ENCODE measurements at regions of chr1 and their contacts with region 1.

Region 1: DNA sequence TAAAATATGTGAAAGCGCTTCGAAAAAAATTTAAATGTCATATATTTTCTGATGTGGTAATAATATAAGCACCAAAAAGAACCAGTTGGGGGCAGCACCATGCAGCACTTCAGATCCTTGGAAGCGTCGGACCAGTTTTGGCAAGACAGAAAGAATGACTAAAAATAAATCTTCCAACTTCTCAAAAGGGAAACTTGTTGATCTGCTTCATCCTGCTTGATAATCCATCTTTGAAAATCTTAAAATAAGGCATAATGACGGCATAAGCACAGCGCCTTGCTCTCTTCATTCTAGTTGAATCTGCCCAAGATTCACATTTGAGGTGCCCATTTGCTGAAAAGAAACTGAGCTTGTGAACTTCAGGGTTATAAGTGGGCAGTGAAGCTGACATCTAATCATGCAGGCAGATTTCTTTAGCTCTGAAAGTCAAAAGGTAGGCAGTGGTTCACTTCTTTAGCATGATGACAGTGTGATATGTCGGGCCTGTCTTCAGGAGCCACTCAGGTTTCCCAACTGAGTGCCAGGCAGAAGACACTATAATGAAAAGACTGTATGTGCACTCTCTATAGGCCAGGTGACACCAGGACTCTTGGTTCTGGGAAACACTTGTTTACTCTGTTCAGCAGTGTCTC is 19.8 kb upstream of the MUTYH start:
- DNase-seq: peak; percentile 77 to 85
- H3K4me3 ChIP-seq: no peak overlapping the region
- CTCF ChIP-seq: no peak
- POLR2A ChIP-seq: no peak

Region 2: GRCh38 chr1:45410850-45411314 is 50.9 kb after region 1 on chr1:
- intact Hi-C with region 1: no loop called
- DNase-seq: peak in 1 of 2 donors; percentile 55
- H3K4me3 ChIP-seq: no peak overlapping the region
- CTCF ChIP-seq: no peak
- POLR2A ChIP-seq: no peak

Region 3: GRCh38 chr1:45490626-45491486 is 130.9 kb after region 1 on chr1 and contains the start of gene TESK2:
- intact Hi-C with region 1: loop called (anchors 5 kb)
- DNase-seq: peak; percentile 99 to 100
- H3K4me3 ChIP-seq: peak within 1 kb of the TSS; percentile 60
- CTCF ChIP-seq: no peak
- POLR2A ChIP-seq: no peak
- total RNA-seq, gene TESK2: 16.9 to 23.8 (median 20.0) TPM

Region 4: DNA sequence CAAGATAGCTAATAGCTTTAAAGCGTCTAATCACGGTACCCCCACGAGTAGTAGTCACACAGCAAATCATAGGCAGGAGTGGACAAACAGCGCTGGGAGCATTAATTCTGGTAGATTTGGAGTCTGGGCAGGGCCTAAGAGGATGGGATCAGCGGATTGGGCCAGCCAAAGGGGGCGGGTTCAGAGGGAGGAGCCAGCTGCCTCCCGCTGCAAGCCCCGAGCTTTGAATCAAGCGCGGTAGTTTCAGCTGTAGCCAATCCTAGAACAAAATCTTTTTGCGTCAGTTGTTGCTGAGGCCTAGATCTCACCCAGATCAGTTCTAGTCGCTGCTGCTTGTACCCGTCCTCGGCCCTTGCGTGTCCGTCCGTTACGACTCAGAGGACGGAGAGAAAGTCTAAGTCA is 223.3 kb after region 1 on chr1:
- intact Hi-C with region 1: loop called (anchors 5 kb)
- DNase-seq: peak; percentile 96 to 98
- H3K4me3 ChIP-seq: peak overlapping the region; percentile 97
- CTCF ChIP-seq: no peak
- POLR2A ChIP-seq: no peak

Region 5: GRCh38 chr1:46983166-46983829 is 1623.3 kb after region 1 on chr1:
- intact Hi-C with region 1: no loop called
- DNase-seq: no peak
- H3K4me3 ChIP-seq: no peak overlapping the region
- CTCF ChIP-seq: no peak
- POLR2A ChIP-seq: no peak

Measured in lower leg skin (tissue), 4 donors.